H1 (cell line): ENCODE measurements at regions of chr2 and their contacts with region 1.

Region 1: GRCh38 chr2:88669371-88670214 is 21.9 kb upstream of the RPIA start:
- DNase-seq: no peak
- H3K4me3 ChIP-seq: no peak overlapping the region
- H3K27ac ChIP-seq: no peak overlapping the region
- H3K4me1 ChIP-seq: no peaks in the 10 kb centered on the region; a peak in 1 of 7 replicates
- H3K27me3 ChIP-seq: no peaks in the 10 kb centered on the region
- CTCF ChIP-seq: peak in 2 of 3 experiments; percentile 76 to 78; a peak in 3 of 4 replicates
- EP300 ChIP-seq: no peak
- POLR2A ChIP-seq: no peak
- RAD21 ChIP-seq: peak; percentile 86 to 92

Region 2: GRCh38 chr2:88606371-88607030 is 63.1 kb before region 1 on chr2:
- CTCF ChIA-PET with region 1: interaction called, 17 read pairs
- POLR2A ChIA-PET with region 1: no interaction called
- DNase-seq: no peak
- H3K4me3 ChIP-seq: no peak overlapping the region
- H3K27ac ChIP-seq: no peak overlapping the region
- H3K4me1 ChIP-seq: peaks cover 0 to 4% (median 2%) of the 10 kb centered on the region in 4 experiments; a peak in 3 of 7 replicates
- H3K27me3 ChIP-seq: no peaks in the 10 kb centered on the region
- CTCF ChIP-seq: no peak
- EP300 ChIP-seq: no peak
- POLR2A ChIP-seq: no peak
- RAD21 ChIP-seq: no peak

Region 3: GRCh38 chr2:88632569-88632968 is 37.0 kb before region 1 on chr2:
- CTCF ChIA-PET with region 1: interaction called, 24 read pairs
- POLR2A ChIA-PET with region 1: interaction called, 7 read pairs
- DNase-seq: no peak
- H3K4me3 ChIP-seq: no peak overlapping the region
- H3K27ac ChIP-seq: no peak overlapping the region
- H3K4me1 ChIP-seq: peaks cover 5 to 28% (median 16%) of the 10 kb centered on the region in 4 experiments; a peak in 6 of 7 replicates
- H3K27me3 ChIP-seq: no peaks in the 10 kb centered on the region
- CTCF ChIP-seq: no peak
- EP300 ChIP-seq: no peak
- POLR2A ChIP-seq: no peak
- RAD21 ChIP-seq: no peak

Region 4: DNA sequence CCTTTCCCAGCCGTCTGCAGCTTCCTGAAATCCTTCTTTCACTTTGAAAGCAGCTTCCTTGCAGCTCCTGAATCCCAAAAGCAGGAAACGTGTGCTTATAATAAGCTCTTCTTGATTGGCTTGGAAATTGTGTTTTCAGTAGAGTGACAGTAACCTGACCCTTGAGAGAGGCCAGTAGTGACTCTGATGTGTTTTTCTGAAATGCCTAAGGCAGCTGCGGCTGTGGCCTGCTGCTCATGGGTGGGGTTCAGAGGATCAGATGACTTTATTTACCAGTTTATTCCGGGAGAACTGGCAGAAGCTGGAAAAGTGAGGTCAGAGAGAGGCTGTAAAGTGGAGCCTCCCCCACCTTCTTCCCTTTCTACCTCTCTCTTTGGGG is 10.1 kb before region 1 on chr2:
- CTCF ChIA-PET with region 1: interaction called, 102 read pairs
- POLR2A ChIA-PET with region 1: interaction called, 3 read pairs
- DNase-seq: no peak
- H3K4me3 ChIP-seq: peak overlapping the region in 2 of 4 experiments; percentile 1 to 22; a peak in 1 of 8 replicates
- H3K27ac ChIP-seq: peak overlapping the region; percentile 58; the same call in 1 of the 2 replicates
- H3K4me1 ChIP-seq: peaks cover 0 to 15% (median 7%) of the 10 kb centered on the region in 4 experiments; a peak in 5 of 7 replicates
- H3K27me3 ChIP-seq: no peaks in the 10 kb centered on the region
- CTCF ChIP-seq: no peak
- EP300 ChIP-seq: no peak
- POLR2A ChIP-seq: no peak
- RAD21 ChIP-seq: no peak

Region 5: DNA sequence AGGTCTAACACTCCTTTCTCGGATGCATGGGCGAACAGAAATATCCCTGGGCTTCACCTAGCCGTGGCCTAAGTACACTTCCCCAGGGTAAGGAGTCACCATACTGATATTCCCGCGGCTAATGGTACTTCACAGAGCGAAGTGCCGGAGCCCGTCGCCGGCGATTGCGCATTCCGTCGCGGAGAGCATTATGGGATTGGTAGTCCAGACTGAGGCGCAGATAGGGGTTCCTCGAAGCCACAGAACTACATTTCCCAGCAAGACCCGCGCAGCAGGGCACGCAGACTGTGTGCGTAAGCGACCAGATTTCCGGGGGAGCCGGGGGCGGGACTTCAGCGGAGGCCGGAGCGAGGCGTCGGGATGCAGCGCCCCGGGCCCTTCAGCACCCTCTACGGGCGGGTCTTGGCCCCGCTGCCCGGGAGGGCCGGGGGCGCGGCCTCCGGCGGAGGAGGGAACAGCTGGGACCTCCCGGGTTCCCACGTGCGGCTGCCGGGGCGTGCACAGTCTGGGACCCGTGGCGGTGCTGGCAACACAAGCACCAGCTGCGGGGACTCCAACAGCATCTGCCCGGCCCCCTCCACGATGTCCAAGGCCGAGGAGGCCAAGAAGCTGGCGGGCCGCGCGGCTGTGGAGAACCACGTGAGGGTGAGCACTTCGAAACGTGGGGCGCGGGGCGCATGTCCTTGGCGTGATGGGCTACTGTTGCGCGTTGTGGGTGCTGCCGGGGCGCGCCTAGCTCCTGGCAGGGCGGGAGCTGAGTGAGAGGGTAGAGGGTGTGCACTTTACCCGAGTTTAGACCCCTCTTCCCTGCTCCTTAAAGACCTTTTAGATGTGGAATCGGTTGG is 22.0 kb after region 1 on chr2 and contains the start of gene RPIA:
- CTCF ChIA-PET with region 1: interaction called, 44 read pairs
- POLR2A ChIA-PET with region 1: no interaction called
- DNase-seq: peak; percentile 97 to 98
- H3K4me3 ChIP-seq: peak within 1 kb of the TSS; percentile 80 to 95 (median 88)
- H3K27ac ChIP-seq: peak within 1 kb of the TSS; percentile 86
- H3K4me1 ChIP-seq: peaks cover 0 to 4% (median 0%) of the 10 kb centered on the region in 4 experiments; a peak in 1 of 7 replicates
- H3K27me3 ChIP-seq: no peaks in the 10 kb centered on the region
- CTCF ChIP-seq: peak; percentile 56 to 87 (median 60)
- EP300 ChIP-seq: peak in 1 of 2 experiments; percentile 22; a peak in 1 of 3 replicates
- POLR2A ChIP-seq: peak; percentile 25 to 89
- RAD21 ChIP-seq: peak; percentile 26 to 43
- total RNA-seq, gene RPIA: 24.0 and 26.7 TPM in 2 replicates